PC-3 (cell line): ENCODE measurements at regions of chr5 and their contacts with region 1.

Region 1: DNA sequence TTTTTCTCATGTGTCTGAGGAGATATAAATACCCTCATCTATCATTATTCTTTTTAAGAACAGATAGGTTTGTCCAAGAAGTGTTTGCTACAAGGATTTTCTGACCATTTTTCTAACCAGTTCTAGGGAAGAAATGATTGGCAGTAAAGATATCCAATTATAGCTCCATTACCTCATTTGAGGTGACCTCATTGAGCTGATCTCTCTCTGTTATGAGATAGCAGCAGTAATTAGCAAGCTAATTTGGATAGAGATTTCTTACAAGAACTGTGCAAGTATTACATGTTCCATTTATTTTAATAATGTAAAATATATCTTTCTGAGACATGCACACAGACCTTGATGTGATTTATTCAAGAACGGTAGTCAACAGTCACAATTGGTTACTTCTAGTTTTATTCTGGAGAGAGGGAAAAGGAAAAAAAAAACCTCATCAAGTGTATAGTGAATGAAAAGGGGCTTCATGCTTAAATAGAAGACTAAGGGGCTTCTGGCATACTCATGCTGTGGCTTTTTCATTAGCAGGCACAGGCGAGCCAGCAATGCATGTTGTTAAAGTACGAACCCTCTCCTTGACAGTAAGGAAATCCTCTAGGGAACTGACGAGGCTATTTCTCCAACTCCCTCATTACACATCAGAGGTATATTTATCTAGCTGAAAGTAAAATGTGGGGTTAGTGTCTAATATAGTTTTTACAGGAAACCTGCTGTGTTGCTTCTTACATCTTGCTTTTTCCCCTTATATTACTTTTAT is 127.3 kb downstream of the NUDT12 start:
- DNase-seq: no peak
- ATAC-seq: no peak
- H3K4me3 ChIP-seq: no peak overlapping the region
- H3K27ac ChIP-seq: no peak overlapping the region
- H3K4me1 ChIP-seq: peaks cover 15% of the 10 kb centered on the region
- H3K27me3 ChIP-seq: no peaks in the 10 kb centered on the region
- CTCF ChIP-seq: no peak

Region 2: GRCh38 chr5:103446813-103447212 is 11.5 kb after region 1 on chr5:
- CTCF ChIA-PET with region 1: no interaction called
- POLR2A ChIA-PET with region 1: interaction called, 12 read pairs
- intact Hi-C with region 1: no loop called
- DNase-seq: peak; percentile 88
- ATAC-seq: peak; percentile 61
- H3K4me3 ChIP-seq: no peak overlapping the region
- H3K27ac ChIP-seq: peak overlapping the region; percentile 8; the same call in 1 of the 2 replicates
- H3K4me1 ChIP-seq: peaks cover 50% of the 10 kb centered on the region
- H3K27me3 ChIP-seq: no peaks in the 10 kb centered on the region
- CTCF ChIP-seq: no peak